Activated naive CD4-positive, alpha-beta T cell treated with anti-CD3 and anti-CD28 coated beads for 36 hours (primary cell): ENCODE measurements at regions of chr6 and their contacts with region 1.

Region 1: GRCh38 chr6:52162940-52163908 is 23.0 kb upstream of the IL17A start:
- DNase-seq: peak; percentile 30
- H3K4me3 Mint-ChIP-seq: no peak overlapping the region
- H3K27ac Mint-ChIP-seq: peak overlapping the region; percentile 55
- H3K4me1 Mint-ChIP-seq: peaks cover 34% of the 10 kb centered on the region
- H3K27me3 Mint-ChIP-seq: peaks cover 18% of the 10 kb centered on the region

Region 2: DNA sequence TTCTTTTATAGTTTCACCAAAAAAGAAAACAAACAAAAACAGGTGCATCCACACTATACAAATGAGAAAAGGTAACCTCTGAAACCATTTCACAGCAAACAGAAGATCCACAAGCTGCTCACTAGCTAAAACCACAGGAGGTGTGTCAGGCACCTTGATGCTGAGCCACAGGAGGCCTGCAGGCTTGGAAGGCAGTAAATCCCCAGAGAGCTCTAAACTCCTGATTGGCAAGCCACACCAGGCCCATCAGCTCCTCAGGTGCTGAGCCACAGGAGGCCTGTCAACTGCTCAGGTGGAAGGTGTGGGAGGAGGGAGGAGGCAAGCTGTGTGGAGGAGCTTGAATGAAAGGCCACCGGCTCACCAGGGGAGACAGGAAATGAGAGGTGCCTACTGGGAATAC is 348.8 kb before region 1 on chr6:
- CTCF ChIA-PET with region 1: no interaction called
- intact Hi-C with region 1: no loop called
- DNase-seq: no peak
- H3K4me3 Mint-ChIP-seq: no peak overlapping the region
- H3K27ac Mint-ChIP-seq: no peak overlapping the region
- H3K4me1 Mint-ChIP-seq: no peaks in the 10 kb centered on the region
- H3K27me3 Mint-ChIP-seq: no peaks in the 10 kb centered on the region

Region 3: GRCh38 chr6:52063584-52064344 is 99.5 kb before region 1 on chr6:
- CTCF ChIA-PET with region 1: interaction called, 14 read pairs
- intact Hi-C with region 1: loop called (anchors 1 kb)
- DNase-seq: peak; percentile 76
- H3K4me3 Mint-ChIP-seq: peak overlapping the region; percentile 20
- H3K27ac Mint-ChIP-seq: peak overlapping the region; percentile 72
- H3K4me1 Mint-ChIP-seq: peaks cover 10% of the 10 kb centered on the region
- H3K27me3 Mint-ChIP-seq: no peaks in the 10 kb centered on the region

Region 4: GRCh38 chr6:52227495-52227894 is 64.3 kb after region 1 on chr6:
- CTCF ChIA-PET with region 1: interaction called, 52 read pairs
- intact Hi-C with region 1: loop called (anchors 1 kb)
- DNase-seq: peak; percentile 91
- H3K4me3 Mint-ChIP-seq: no peak overlapping the region
- H3K27ac Mint-ChIP-seq: no peak overlapping the region
- H3K4me1 Mint-ChIP-seq: peaks cover 18% of the 10 kb centered on the region
- H3K27me3 Mint-ChIP-seq: peaks cover 24% of the 10 kb centered on the region

Region 5: GRCh38 chr6:52284460-52285176 is 121.4 kb after region 1 on chr6 and contains the start of gene MCM3:
- CTCF ChIA-PET with region 1: interaction called, 22 read pairs
- intact Hi-C with region 1: loop called (anchors 1 kb)
- DNase-seq: peak; percentile 98
- H3K4me3 Mint-ChIP-seq: no peak within 1 kb of the TSS
- H3K27ac Mint-ChIP-seq: no peak within 1 kb of the TSS
- H3K4me1 Mint-ChIP-seq: peaks cover 51% of the 10 kb centered on the region
- H3K27me3 Mint-ChIP-seq: no peaks in the 10 kb centered on the region
- total RNA-seq, gene MCM3: 256 to 258 TPM

Region 6: DNA sequence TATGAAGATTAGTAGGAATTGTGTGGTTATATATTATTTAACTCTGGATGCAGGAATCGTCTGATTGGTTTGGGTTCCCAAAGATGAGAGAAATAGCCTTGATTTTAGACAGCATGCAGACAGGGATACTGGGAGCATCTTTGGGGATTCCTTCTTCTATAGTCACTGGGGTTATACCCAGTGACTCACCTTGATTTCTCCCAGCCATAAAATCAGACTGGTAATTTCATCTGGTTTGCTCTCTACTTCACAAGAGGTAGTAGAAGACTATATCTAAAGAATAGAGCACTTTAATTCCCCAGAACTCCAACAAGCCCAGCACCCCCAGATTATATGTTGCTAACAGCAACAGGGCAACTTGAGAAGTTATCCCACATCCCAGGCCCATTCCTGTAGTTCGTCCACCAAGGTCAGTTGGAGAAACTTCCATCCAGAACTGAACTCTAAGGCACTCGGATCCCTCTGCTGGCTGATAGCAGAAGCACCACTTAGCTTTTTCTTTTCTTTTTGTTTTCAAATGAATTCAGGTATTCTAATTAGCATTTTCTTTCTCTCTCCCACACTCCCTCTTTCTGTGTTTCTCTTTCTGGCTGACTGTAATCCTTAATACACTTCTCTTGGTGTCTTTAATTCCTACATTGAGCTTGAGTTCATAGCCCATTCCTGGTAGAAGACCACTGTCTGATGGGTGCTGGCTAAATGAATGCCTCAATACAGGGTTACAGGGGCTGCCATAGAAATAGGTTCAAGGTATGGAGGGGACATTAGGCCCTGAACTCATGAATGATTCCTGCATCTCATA is 236.5 kb after region 1 on chr6:
- CTCF ChIA-PET with region 1: interaction called, 11 read pairs
- intact Hi-C with region 1: loop called (anchors 1 kb)
- DNase-seq: peak; percentile 64
- H3K4me3 Mint-ChIP-seq: no peak overlapping the region
- H3K27ac Mint-ChIP-seq: peak overlapping the region; percentile 73
- H3K4me1 Mint-ChIP-seq: peaks cover 72% of the 10 kb centered on the region
- H3K27me3 Mint-ChIP-seq: no peaks in the 10 kb centered on the region

Region 7: DNA sequence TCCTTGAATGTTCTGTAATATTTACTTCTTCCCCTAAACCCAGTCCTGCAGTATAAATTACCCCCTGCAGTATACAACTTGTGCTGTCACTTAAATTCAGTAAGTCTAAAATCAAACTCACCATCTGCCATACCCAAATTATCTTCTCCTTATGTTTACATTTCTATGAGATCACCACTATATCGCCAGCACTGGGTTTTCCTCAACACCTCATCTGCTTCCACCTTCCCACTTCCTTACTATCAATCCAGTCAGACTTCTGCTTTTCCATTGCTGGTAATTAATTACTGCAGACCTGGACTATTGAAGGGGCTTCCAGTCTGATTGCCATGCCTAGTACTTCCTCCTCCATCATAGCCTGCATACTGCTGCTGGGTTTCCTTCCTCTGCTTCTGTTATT is 272.1 kb after region 1 on chr6:
- CTCF ChIA-PET with region 1: no interaction called
- intact Hi-C with region 1: no loop called
- DNase-seq: no peak
- H3K4me3 Mint-ChIP-seq: no peak overlapping the region
- H3K27ac Mint-ChIP-seq: no peak overlapping the region
- H3K4me1 Mint-ChIP-seq: peaks cover 3% of the 10 kb centered on the region
- H3K27me3 Mint-ChIP-seq: no peaks in the 10 kb centered on the region

Region 8: DNA sequence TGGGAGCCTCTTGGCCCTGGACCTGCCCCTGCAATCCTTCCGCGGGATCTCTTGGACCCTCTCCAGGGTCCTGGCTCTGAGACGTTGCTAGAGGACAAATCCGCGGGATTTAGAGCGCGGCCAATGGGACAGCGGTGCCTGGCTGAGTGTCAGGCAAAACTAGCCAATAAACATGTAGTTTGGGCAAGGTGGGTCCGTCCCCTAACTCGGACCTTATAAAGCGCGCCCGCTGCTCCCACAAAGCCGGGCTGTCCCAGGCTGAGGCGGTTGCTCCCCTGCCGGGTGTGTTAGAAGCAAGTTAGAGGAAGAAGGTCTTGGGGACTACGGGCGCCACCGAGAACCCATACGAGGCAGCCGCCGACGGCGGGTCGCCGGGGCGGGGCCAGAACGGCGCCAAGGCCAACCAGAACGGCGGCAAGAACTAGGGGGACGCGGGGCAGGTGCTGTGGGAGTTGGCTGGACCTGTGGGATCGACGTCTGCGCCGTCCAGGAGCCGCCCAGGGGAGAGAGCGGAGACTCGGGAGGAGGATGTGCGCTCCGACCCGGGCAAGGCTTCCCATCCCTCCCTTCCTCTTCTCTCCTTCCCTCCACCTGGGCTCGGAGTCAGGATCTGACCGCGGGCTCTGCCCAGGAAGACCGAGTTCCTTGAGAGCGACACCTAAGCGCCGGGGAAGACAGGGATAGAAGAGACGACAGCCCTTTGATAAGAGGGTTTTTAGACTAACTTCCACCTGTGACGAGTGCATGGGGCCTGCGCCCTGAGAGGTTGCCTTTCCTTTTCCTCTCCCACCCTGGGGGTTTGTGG is 501.2 kb after region 1 on chr6:
- CTCF ChIA-PET with region 1: interaction called, 4 read pairs
- intact Hi-C with region 1: loop called (anchors 1 kb)
- DNase-seq: peak; percentile 86
- H3K4me3 Mint-ChIP-seq: no peak overlapping the region
- H3K27ac Mint-ChIP-seq: no peak overlapping the region
- H3K4me1 Mint-ChIP-seq: peaks cover 3% of the 10 kb centered on the region
- H3K27me3 Mint-ChIP-seq: no peaks in the 10 kb centered on the region

Region 9: DNA sequence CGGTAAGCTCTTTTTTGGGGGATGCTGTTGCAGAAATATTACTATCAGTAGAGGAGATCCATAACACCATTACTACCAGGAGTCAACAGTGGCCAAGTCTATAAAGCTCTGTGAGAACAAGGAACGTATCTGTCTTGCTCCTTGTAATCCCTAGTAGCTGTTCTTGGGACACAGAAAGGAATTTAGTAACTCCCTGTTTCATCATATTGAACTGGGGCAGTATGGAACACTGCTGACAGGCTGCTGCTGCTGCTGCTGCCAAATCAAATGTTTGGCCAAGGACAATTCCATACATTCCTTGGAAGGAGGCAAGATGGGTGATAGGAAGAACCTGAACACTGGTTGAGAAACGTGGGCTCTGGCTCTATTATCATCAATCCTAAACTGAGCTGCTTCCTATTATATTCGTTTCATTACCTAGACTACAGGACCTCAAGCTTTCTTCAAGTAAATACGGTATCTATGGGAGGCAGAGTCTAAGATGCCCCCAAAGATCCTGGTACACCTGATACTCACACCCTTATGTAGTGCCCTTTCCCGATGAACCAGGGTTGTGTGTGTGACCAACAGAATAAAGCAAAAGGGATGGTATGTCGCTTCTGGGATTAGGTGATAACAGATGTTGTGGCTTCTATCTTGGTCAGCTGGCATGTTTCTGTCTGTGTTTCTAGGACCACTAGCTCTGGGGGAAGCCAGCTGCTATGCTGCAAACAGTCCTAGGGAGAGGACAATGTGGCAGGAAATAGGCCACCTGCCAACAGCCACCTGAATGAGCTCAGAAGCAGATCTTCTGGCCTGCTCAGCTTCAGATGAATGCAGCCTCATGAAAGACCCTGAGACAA is 1146.1 kb after region 1 on chr6:
- CTCF ChIA-PET with region 1: no interaction called
- intact Hi-C with region 1: loop called (anchors 2 kb)
- DNase-seq: no peak
- H3K4me3 Mint-ChIP-seq: no peak overlapping the region
- H3K27ac Mint-ChIP-seq: no peak overlapping the region
- H3K4me1 Mint-ChIP-seq: peaks cover 80% of the 10 kb centered on the region
- H3K27me3 Mint-ChIP-seq: no peaks in the 10 kb centered on the region